MCF 10A (cell line): ENCODE measurements at regions of chr10 and their contacts with region 1.

Region 1: GRCh38 chr10:95246579-95247051 is 44.2 kb downstream of the PDLIM1 start:
- DNase-seq: peak; percentile 78
- H3K4me3 Mint-ChIP-seq: no peak overlapping the region
- H3K27ac Mint-ChIP-seq: no peak overlapping the region
- H3K4me1 Mint-ChIP-seq: peaks cover 27% of the 10 kb centered on the region
- H3K27me3 Mint-ChIP-seq: no peaks in the 10 kb centered on the region
- CTCF ChIP-seq: peak; percentile 81

Region 2: GRCh38 chr10:93726024-93726423 is 1520.6 kb before region 1 on chr10:
- CTCF ChIA-PET with region 1: no interaction called
- POLR2A ChIA-PET with region 1: no interaction called
- intact Hi-C with region 1: no loop called
- DNase-seq: no peak
- H3K4me3 Mint-ChIP-seq: no peak overlapping the region
- H3K27ac Mint-ChIP-seq: no peak overlapping the region
- H3K4me1 Mint-ChIP-seq: peaks cover under 1% of the 10 kb centered on the region
- H3K27me3 Mint-ChIP-seq: peaks cover 55% of the 10 kb centered on the region
- CTCF ChIP-seq: no peak

Region 3: DNA sequence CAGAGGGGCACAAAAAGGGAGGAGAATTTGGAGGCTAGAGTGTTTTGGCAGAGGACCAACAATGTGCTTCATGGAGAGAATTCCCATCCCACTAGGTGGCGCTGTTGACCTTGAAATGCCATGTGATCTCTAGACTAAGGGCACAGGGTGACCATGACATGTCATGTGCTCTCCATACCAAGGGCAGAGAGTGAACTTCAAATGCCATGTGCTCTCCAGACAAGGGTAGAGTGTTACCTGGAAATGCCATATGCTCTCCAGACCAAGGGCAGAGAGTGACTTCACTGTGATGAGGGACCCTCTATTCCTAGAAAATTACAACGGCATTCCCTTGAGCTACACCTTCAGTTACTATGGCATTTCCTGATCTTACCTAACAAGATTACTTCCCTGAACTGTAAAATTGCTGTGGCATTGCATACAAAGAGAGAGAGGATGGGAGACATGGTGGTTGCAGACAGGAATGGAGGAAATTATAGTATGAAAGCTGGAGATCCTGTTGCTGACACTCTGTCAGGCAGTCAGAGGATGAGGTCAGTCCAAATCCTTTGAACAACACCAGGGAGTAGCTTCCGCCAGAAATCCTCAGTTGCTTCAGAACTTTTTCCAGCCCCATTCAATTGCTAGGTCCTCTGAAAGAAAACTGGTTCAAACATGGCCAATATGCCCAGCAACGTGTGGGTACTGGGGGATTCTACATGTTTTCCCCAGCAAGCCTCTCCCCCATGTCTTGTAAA is 113.4 kb before region 1 on chr10:
- CTCF ChIA-PET with region 1: interaction called, 8 read pairs
- POLR2A ChIA-PET with region 1: no interaction called
- intact Hi-C with region 1: loop called (anchors 1 kb)
- DNase-seq: peak; percentile 88
- H3K4me3 Mint-ChIP-seq: no peak overlapping the region
- H3K27ac Mint-ChIP-seq: no peak overlapping the region
- H3K4me1 Mint-ChIP-seq: no peaks in the 10 kb centered on the region
- H3K27me3 Mint-ChIP-seq: peaks cover 15% of the 10 kb centered on the region
- CTCF ChIP-seq: peak; percentile 71

Region 4: GRCh38 chr10:95208702-95209391 is 37.8 kb before region 1 on chr10:
- CTCF ChIA-PET with region 1: interaction called, 46 read pairs
- POLR2A ChIA-PET with region 1: interaction called, 3 read pairs
- intact Hi-C with region 1: loop called (anchors 1 kb)
- DNase-seq: peak; percentile 20
- H3K4me3 Mint-ChIP-seq: no peak overlapping the region
- H3K27ac Mint-ChIP-seq: no peak overlapping the region
- H3K4me1 Mint-ChIP-seq: no peaks in the 10 kb centered on the region
- H3K27me3 Mint-ChIP-seq: no peaks in the 10 kb centered on the region
- CTCF ChIP-seq: peak; percentile 29

Region 5: DNA sequence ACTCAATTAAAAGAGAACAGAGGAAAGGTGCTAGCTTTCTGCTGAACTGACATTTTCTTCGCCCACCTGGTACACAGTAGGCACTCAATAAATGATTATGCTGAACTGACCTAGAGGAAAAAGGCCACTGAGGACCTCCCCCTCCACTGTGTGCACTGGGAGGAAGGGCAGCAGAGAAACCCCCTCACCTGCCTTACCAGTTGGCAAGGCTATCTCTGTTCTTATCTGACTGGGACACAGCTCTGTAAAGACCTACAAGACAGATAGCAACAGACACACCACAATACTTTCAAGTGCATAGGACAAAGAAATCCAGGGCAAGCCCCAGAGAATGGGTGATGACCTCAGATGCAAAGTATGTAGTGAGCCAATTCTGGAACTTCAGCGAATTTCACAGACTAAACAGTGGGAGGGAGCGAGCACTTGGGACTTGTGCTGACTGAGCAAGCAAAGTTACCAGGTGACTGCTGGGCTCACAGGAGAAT is 13.8 kb after region 1 on chr10:
- CTCF ChIA-PET with region 1: interaction called, 27 read pairs
- POLR2A ChIA-PET with region 1: interaction called, 4 read pairs
- intact Hi-C with region 1: no loop called
- DNase-seq: peak; percentile 73
- H3K4me3 Mint-ChIP-seq: no peak overlapping the region
- H3K27ac Mint-ChIP-seq: peak overlapping the region; percentile 77
- H3K4me1 Mint-ChIP-seq: peaks cover 28% of the 10 kb centered on the region
- H3K27me3 Mint-ChIP-seq: no peaks in the 10 kb centered on the region
- CTCF ChIP-seq: no peak

Region 6: GRCh38 chr10:95308389-95309302 is 62.0 kb after region 1 on chr10:
- CTCF ChIA-PET with region 1: interaction called, 5 read pairs
- POLR2A ChIA-PET with region 1: interaction called, 4 read pairs
- intact Hi-C with region 1: loop called (anchors 5 kb)
- DNase-seq: peak; percentile 98
- H3K4me3 Mint-ChIP-seq: peak overlapping the region; percentile 4
- H3K27ac Mint-ChIP-seq: peak overlapping the region; percentile 6
- H3K4me1 Mint-ChIP-seq: peaks cover 27% of the 10 kb centered on the region
- H3K27me3 Mint-ChIP-seq: peaks cover 12% of the 10 kb centered on the region
- CTCF ChIP-seq: no peak

Region 7: GRCh38 chr10:95601116-95601719 is 354.6 kb after region 1 on chr10:
- CTCF ChIA-PET with region 1: interaction called, 6 read pairs
- POLR2A ChIA-PET with region 1: no interaction called
- intact Hi-C with region 1: loop called (anchors 5 kb)
- DNase-seq: peak; percentile 89
- H3K4me3 Mint-ChIP-seq: no peak overlapping the region
- H3K27ac Mint-ChIP-seq: no peak overlapping the region
- H3K4me1 Mint-ChIP-seq: no peaks in the 10 kb centered on the region
- H3K27me3 Mint-ChIP-seq: peaks cover 21% of the 10 kb centered on the region
- CTCF ChIP-seq: peak; percentile 87